CD8-positive, alpha-beta T cell (primary cell): ENCODE measurements at regions of chr6 and their contacts with region 1.

Region 1: GRCh38 chr6:73129653-73130443 is 95.4 kb downstream of the KHDC1L start:
- DNase-seq: peak; percentile 54 to 89 (median 77)
- ATAC-seq: peak; percentile 83
- H3K4me3 ChIP-seq: no peak overlapping the region
- H3K4me3 Mint-ChIP-seq: peak overlapping the region; percentile 16
- H3K27ac ChIP-seq: no peak overlapping the region
- H3K27ac Mint-ChIP-seq: no peak overlapping the region
- H3K4me1 ChIP-seq: no peaks in the 10 kb centered on the region
- H3K4me1 Mint-ChIP-seq: peaks cover 4% of the 10 kb centered on the region
- H3K27me3 ChIP-seq: no peaks in the 10 kb centered on the region
- H3K27me3 Mint-ChIP-seq: peaks cover 2% of the 10 kb centered on the region
- CTCF ChIP-seq: peak; percentile 94

Region 2: GRCh38 chr6:72411872-72412708 is 717.8 kb before region 1 on chr6:
- CTCF ChIA-PET with region 1: interaction called, 147 read pairs
- POLR2A ChIA-PET with region 1: interaction called, 3 read pairs
- intact Hi-C with region 1: loop called (anchors 1 kb)
- DNase-seq: peak; percentile 57 to 87 (median 73)
- ATAC-seq: peak; percentile 98
- H3K4me3 ChIP-seq: no peak overlapping the region
- H3K4me3 Mint-ChIP-seq: no peak overlapping the region
- H3K27ac ChIP-seq: no peak overlapping the region
- H3K27ac Mint-ChIP-seq: no peak overlapping the region
- H3K4me1 ChIP-seq: no peaks in the 10 kb centered on the region
- H3K4me1 Mint-ChIP-seq: no peaks in the 10 kb centered on the region
- H3K27me3 ChIP-seq: no peaks in the 10 kb centered on the region
- H3K27me3 Mint-ChIP-seq: peaks cover 8% of the 10 kb centered on the region
- CTCF ChIP-seq: peak; percentile 100

Region 3: GRCh38 chr6:72522719-72523141 is 607.1 kb before region 1 on chr6:
- CTCF ChIA-PET with region 1: interaction called, 7 read pairs
- POLR2A ChIA-PET with region 1: no interaction called
- intact Hi-C with region 1: loop called (anchors 5 kb)
- DNase-seq: peak in 6 of 9 experiments; percentile 0 to 54 (median 18)
- ATAC-seq: no peak
- H3K4me3 ChIP-seq: no peak overlapping the region
- H3K4me3 Mint-ChIP-seq: no peak overlapping the region
- H3K27ac ChIP-seq: no peak overlapping the region
- H3K27ac Mint-ChIP-seq: no peak overlapping the region
- H3K4me1 ChIP-seq: no peaks in the 10 kb centered on the region
- H3K4me1 Mint-ChIP-seq: no peaks in the 10 kb centered on the region
- H3K27me3 ChIP-seq: no peaks in the 10 kb centered on the region
- H3K27me3 Mint-ChIP-seq: peaks cover 17% of the 10 kb centered on the region
- CTCF ChIP-seq: no peak

Region 4: DNA sequence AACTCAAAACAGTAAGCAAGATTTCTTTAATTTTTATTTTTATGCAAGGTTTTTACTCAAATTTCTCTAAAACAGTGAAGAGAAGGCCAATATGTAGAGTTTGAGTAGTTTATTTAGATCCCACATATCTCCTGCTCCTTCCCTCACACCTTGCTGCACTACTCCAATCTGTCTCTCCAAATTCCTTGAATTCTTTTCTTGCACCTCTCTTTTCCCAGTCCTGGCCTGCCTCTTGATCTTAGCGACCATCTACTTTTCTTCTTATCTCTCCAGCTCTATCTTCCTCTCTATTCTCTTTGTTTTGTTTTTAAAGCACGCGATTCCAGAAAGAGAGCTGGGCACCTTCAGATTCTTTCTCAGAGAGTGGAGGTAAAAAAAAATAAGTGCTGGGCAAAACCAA is 594.7 kb before region 1 on chr6:
- CTCF ChIA-PET with region 1: interaction called, 4 read pairs
- POLR2A ChIA-PET with region 1: no interaction called
- intact Hi-C with region 1: loop called in 1 of 2 experiments (anchors 5 kb)
- DNase-seq: no peak
- ATAC-seq: no peak
- H3K4me3 ChIP-seq: no peak overlapping the region
- H3K4me3 Mint-ChIP-seq: no peak overlapping the region
- H3K27ac ChIP-seq: no peak overlapping the region
- H3K27ac Mint-ChIP-seq: no peak overlapping the region
- H3K4me1 ChIP-seq: no peaks in the 10 kb centered on the region
- H3K4me1 Mint-ChIP-seq: no peaks in the 10 kb centered on the region
- H3K27me3 ChIP-seq: no peaks in the 10 kb centered on the region
- H3K27me3 Mint-ChIP-seq: peaks cover 8% of the 10 kb centered on the region
- CTCF ChIP-seq: no peak

Region 5: DNA sequence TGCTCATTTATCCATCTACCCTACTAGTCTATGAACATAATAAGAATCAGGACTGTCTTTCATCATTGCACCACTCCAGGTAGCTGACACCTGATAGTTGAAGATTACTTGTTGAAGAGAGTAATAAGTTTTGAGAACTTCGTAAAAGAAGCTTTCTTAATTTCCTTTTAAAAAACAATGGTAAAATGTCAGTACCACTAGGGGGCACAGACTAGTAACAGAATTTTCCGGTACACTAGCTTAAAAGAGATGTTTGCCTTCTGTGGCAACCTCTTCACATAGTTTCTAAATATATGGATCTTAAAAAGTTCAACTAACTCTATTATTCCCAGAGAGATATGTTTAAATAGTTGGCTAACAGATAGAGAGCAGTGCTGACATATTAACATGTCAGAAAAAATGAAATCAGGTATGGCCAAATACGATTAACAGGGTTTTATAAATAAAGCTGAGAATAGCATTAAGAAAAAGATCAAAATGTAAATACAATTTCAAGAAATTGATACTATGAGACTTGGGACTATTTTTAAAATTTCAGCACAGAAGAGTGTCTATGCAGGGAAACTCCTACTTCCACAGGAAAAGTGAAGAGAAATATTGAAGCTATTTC is 513.3 kb before region 1 on chr6:
- CTCF ChIA-PET with region 1: interaction called, 222 read pairs
- POLR2A ChIA-PET with region 1: interaction called, 3 read pairs
- intact Hi-C with region 1: loop called (anchors 1 to 2 kb)
- DNase-seq: peak in 2 of 9 experiments; percentile 50 to 67
- ATAC-seq: no peak
- H3K4me3 ChIP-seq: no peak overlapping the region
- H3K4me3 Mint-ChIP-seq: no peak overlapping the region
- H3K27ac ChIP-seq: no peak overlapping the region
- H3K27ac Mint-ChIP-seq: peak overlapping the region; percentile 68
- H3K4me1 ChIP-seq: peaks cover 19% of the 10 kb centered on the region
- H3K4me1 Mint-ChIP-seq: peaks cover 51% of the 10 kb centered on the region
- H3K27me3 ChIP-seq: no peaks in the 10 kb centered on the region
- H3K27me3 Mint-ChIP-seq: no peaks in the 10 kb centered on the region
- CTCF ChIP-seq: peak; percentile 71

Region 6: DNA sequence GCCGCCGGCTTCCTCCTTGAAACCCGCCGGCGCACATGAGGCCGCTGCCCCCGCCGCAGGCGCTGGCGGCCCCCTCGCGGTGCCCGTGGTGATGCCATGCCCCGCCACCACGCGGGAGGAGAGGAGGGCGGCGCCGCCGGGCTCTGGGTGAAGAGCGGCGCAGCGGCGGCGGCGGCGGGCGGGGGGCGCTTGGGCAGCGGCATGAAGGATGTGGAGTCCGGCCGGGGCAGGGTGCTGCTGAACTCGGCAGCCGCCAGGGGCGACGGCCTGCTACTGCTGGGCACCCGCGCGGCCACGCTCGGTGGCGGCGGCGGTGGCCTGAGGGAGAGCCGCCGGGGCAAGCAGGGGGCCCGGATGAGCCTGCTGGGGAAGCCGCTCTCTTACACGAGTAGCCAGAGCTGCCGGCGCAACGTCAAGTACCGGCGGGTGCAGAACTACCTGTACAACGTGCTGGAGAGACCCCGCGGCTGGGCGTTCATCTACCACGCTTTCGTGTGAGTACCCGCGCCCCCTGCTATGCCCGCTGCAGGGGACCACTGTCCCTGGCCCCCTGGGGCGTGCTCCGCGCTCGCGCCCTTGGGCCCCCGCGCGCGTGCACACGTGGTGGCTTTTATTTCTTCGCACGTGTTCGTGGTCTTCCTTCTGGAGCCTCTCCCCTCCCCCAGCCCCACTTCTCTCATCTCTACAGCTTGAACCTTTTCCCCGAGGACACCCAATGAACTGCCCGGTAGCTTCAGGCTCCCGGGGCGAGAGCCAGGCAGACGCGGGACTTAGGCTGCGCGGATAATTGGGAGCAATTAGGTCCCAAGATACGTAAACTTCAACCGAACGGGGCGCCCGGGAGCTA is 507.5 kb before region 1 on chr6:
- CTCF ChIA-PET with region 1: interaction called, 222 read pairs
- POLR2A ChIA-PET with region 1: interaction called, 3 read pairs
- intact Hi-C with region 1: loop called in 1 of 2 experiments (anchors 2 kb)
- DNase-seq: peak; percentile 34 to 82 (median 59)
- ATAC-seq: peak; percentile 42
- H3K4me3 ChIP-seq: peak overlapping the region; percentile 79 to 80
- H3K4me3 Mint-ChIP-seq: peak overlapping the region; percentile 96
- H3K27ac ChIP-seq: peak overlapping the region in 1 of 2 experiments; percentile 17
- H3K27ac Mint-ChIP-seq: peak overlapping the region; percentile 19
- H3K4me1 ChIP-seq: peaks cover 21% of the 10 kb centered on the region
- H3K4me1 Mint-ChIP-seq: peaks cover 57% of the 10 kb centered on the region
- H3K27me3 ChIP-seq: no peaks in the 10 kb centered on the region
- H3K27me3 Mint-ChIP-seq: no peaks in the 10 kb centered on the region
- CTCF ChIP-seq: peak; percentile 15